Activated T-helper 1 cell treated with anti-CD3 and anti-CD28 coated beads, Interleukin-12 subunit alpha, Interleukin-12 subunit beta, Interleukin-2, Interleukin-4 antibody, amounts not matched to agents 30 ng/mL and 10 ng/mL and 1 ng/mL, durations not matched to agents 14 hours and 24 hours and 36 hours (primary cell): ENCODE measurements at regions of chr4 and their contacts with region 1.

Region 1: DNA sequence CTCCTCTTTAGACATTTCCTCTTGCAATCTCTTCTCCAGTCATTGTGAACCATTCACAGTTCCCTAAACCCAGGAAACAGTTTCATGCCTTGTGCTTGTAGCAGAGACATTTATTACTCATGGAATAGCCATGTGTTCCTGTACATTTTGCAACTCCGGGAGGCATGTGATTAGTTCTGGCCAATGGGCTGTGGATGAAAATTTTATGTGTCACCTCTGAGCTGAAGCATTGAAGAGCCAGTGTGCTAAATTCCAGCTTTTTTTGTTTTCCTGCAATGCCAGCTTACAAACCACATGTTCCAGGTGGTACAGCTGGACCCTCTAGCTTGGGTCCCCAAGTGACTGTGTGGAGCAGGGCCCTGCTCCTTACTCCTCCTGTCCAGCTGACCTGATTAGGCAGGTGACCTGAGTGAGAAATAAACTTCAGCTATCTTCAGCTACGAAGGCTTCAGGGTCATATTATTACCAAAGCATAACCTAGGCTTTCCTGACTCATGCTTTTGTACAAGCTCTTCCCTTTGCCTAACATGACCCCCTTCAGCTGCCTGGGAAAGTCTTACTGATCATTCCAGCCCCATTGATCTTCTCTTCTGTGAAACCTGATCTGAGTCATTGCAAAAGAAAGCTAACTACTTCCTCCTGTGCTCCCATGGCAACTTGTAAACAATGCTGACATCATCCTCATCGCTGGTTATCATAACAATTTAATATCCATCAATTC is 200.4 kb downstream of the PTTG2 start:
- DNase-seq: peak; percentile 66
- H3K4me3 Mint-ChIP-seq: peak overlapping the region; percentile 51
- H3K27ac Mint-ChIP-seq: peak overlapping the region; percentile 90
- H3K4me1 Mint-ChIP-seq: peaks cover 80% of the 10 kb centered on the region
- H3K27me3 Mint-ChIP-seq: peaks cover 7% of the 10 kb centered on the region

Region 2: GRCh38 chr4:38062088-38062893 is 98.4 kb before region 1 on chr4:
- intact Hi-C with region 1: loop called (anchors 5 kb)
- DNase-seq: peak; percentile 42
- H3K4me3 Mint-ChIP-seq: peak overlapping the region; percentile 83
- H3K27ac Mint-ChIP-seq: peak overlapping the region; percentile 69
- H3K4me1 Mint-ChIP-seq: peaks cover 16% of the 10 kb centered on the region
- H3K27me3 Mint-ChIP-seq: no peaks in the 10 kb centered on the region

Region 3: GRCh38 chr4:38078590-38079421 is 81.8 kb before region 1 on chr4:
- intact Hi-C with region 1: loop called (anchors 5 kb)
- DNase-seq: no peak
- H3K4me3 Mint-ChIP-seq: no peak overlapping the region
- H3K27ac Mint-ChIP-seq: peak overlapping the region; percentile 77
- H3K4me1 Mint-ChIP-seq: peaks cover 30% of the 10 kb centered on the region
- H3K27me3 Mint-ChIP-seq: no peaks in the 10 kb centered on the region

Region 4: GRCh38 chr4:38091636-38092035 is 69.0 kb before region 1 on chr4:
- intact Hi-C with region 1: loop called (anchors 5 kb)
- DNase-seq: no peak
- H3K4me3 Mint-ChIP-seq: no peak overlapping the region
- H3K27ac Mint-ChIP-seq: no peak overlapping the region
- H3K4me1 Mint-ChIP-seq: peaks cover 23% of the 10 kb centered on the region
- H3K27me3 Mint-ChIP-seq: no peaks in the 10 kb centered on the region

Region 5: GRCh38 chr4:38523524-38524448 is 363.1 kb after region 1 on chr4:
- intact Hi-C with region 1: loop called (anchors 5 kb)
- DNase-seq: peak; percentile 48
- H3K4me3 Mint-ChIP-seq: peak overlapping the region; percentile 19
- H3K27ac Mint-ChIP-seq: peak overlapping the region; percentile 51
- H3K4me1 Mint-ChIP-seq: peaks cover 23% of the 10 kb centered on the region
- H3K27me3 Mint-ChIP-seq: peaks cover 32% of the 10 kb centered on the region

Region 6: DNA sequence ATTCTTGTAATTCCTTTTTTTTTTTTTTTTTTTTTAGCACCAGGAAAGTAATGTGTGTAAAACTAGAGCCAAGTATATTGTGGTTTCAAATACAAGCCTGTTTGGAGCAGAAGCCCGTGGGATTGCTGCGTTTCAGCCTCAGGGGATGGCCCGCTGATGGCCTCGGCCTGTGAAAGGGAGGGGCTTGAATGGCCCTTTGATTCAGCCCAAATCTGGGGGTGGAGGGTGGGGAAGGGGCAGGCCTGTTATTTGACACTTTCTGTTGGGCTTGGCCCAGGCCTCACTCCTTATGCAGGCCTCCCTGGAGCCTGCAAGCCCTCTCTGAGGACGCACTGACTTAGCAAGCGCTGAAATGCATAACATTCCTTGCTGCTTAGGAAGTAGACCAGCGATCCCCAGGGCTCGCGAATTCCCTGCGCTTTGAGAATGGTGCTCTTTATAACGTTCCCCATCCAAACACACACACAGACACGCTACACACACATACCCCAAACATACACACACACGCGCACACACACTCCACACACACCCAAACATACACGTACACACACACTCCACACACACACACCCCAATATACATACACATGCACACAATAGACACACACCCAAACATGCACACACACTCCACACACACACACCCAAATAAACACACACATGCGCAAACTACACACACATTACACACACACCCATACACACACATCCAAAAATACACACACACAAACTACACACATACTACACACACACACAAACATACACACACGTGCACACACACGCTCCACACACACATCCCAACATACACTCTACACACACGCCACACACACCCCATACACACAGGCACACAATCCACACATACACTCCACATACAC is 592.5 kb after region 1 on chr4:
- intact Hi-C with region 1: loop called (anchors 1 kb)
- DNase-seq: no peak
- H3K4me3 Mint-ChIP-seq: no peak overlapping the region
- H3K27ac Mint-ChIP-seq: no peak overlapping the region
- H3K4me1 Mint-ChIP-seq: peaks cover 22% of the 10 kb centered on the region
- H3K27me3 Mint-ChIP-seq: peaks cover 3% of the 10 kb centered on the region